ENCODE measurements at regions of chr5 and their contacts with region 1.

Region 1: GRCh38 chr5:35777358-35778087 is 79.2 kb upstream of the IL7R start:
- DNase-seq: peak; percentile 63
- ATAC-seq: peak; percentile 75
- H3K4me3 ChIP-seq: no peak overlapping the region
- H3K27ac ChIP-seq: no peak overlapping the region
- H3K4me1 ChIP-seq: no peaks in the 10 kb centered on the region
- H3K27me3 ChIP-seq: no peaks in the 10 kb centered on the region; a peak in 1 of 5 replicates
- CTCF ChIP-seq: peak; percentile 63
- EP300 ChIP-seq: no peak
- POLR2A ChIP-seq: no peak
- RAD21 ChIP-seq: 0 out of 2 replicates have a peak, but pooled peaks have one; percentile 20

Region 2: GRCh38 chr5:35651002-35651756 is 126.3 kb before region 1 on chr5:
- CTCF ChIA-PET with region 1: no interaction called
- POLR2A ChIA-PET with region 1: no interaction called
- in situ Hi-C with region 1: no loop called
- intact Hi-C with region 1: loop called (anchors 2 kb)
- DNase-seq: peak; percentile 32
- ATAC-seq: peak; percentile 95
- H3K4me3 ChIP-seq: no peak overlapping the region
- H3K27ac ChIP-seq: no peak overlapping the region
- H3K4me1 ChIP-seq: no peaks in the 10 kb centered on the region
- H3K27me3 ChIP-seq: no peaks in the 10 kb centered on the region
- CTCF ChIP-seq: peak; percentile 69
- EP300 ChIP-seq: no peak
- POLR2A ChIP-seq: no peak
- RAD21 ChIP-seq: no peak

Region 3: DNA sequence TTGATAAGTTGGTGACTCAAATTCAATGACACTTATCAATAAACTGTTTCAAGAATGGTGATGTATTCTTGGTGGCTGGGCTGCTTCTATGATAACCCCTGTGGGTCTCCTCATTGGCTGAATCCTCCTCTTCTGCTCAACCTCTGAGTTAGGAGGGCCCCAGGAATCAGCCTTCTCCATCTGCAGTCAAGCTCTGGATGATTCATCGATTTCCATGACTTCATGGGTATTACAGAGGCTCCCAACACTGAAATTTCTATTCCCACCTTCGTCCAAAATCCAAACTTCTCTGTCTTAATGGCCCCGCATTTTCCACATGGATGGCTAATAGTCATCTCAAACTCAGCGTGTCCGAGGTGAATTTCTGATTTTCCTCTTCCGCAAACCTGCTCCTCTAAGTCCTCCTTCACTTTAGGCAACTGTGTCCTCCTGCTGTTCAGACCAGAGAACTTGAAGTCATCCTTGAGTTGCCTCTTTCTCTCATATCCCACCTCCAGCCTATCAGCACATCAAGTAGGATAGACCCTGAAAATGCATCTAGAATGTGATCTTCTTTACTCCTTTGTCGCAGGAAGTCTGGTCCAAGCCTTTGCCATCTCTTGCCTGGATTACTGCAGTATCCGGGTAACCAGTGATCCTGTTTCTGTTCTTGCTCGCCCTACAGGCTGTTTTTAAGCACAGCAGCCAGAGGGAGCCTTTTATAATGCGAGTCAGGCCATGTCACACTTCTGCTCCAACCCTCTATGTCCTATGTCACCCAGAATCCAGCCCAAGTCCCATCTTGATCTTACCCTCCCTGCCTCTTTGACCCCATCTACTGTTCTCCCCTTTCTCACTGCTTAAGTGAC is 37.8 kb after region 1 on chr5:
- CTCF ChIA-PET with region 1: interaction called, 7 read pairs
- POLR2A ChIA-PET with region 1: no interaction called
- in situ Hi-C with region 1: no loop called
- intact Hi-C with region 1: loop called (anchors 1 kb)
- DNase-seq: peak; percentile 44
- ATAC-seq: peak; percentile 97
- H3K4me3 ChIP-seq: no peak overlapping the region
- H3K27ac ChIP-seq: no peak overlapping the region
- H3K4me1 ChIP-seq: peaks cover 9% of the 10 kb centered on the region
- H3K27me3 ChIP-seq: no peaks in the 10 kb centered on the region
- CTCF ChIP-seq: peak; percentile 69
- EP300 ChIP-seq: no peak
- POLR2A ChIP-seq: no peak
- RAD21 ChIP-seq: no peak

Measured in HepG2 (cell line).